ENCODE measurements at regions of chr1 and their contacts with region 1.

Region 1: GRCh38 chr1:92994105-92994712 is 32.9 kb upstream of the DIPK1A start:
- DNase-seq: peak; percentile 46
- H3K4me3 ChIP-seq: no peak overlapping the region
- CTCF ChIP-seq: peak; percentile 55

Region 2: DNA sequence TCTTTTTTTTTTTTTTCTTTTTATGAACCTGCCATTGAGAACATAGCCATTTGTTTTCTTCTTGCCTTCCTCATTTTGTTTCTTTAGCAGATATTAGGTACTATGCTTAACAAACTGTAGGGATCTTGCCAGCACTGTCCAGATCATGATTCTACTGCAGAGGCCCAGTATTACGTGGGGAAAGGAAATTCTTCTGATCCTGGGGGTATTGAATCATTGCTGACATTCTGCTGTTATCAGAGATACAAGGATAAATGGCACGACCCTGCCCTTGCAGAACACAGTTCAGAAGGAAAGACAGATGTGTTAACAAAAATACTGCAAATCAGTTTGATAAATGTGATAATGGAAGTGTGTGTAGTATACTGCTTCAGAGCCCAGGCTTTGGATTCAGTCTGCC is 857.9 kb before region 1 on chr1:
- CTCF ChIA-PET with region 1: no interaction called
- POLR2A ChIA-PET with region 1: no interaction called
- DNase-seq: no peak
- H3K4me3 ChIP-seq: no peak overlapping the region
- CTCF ChIP-seq: no peak

Region 3: DNA sequence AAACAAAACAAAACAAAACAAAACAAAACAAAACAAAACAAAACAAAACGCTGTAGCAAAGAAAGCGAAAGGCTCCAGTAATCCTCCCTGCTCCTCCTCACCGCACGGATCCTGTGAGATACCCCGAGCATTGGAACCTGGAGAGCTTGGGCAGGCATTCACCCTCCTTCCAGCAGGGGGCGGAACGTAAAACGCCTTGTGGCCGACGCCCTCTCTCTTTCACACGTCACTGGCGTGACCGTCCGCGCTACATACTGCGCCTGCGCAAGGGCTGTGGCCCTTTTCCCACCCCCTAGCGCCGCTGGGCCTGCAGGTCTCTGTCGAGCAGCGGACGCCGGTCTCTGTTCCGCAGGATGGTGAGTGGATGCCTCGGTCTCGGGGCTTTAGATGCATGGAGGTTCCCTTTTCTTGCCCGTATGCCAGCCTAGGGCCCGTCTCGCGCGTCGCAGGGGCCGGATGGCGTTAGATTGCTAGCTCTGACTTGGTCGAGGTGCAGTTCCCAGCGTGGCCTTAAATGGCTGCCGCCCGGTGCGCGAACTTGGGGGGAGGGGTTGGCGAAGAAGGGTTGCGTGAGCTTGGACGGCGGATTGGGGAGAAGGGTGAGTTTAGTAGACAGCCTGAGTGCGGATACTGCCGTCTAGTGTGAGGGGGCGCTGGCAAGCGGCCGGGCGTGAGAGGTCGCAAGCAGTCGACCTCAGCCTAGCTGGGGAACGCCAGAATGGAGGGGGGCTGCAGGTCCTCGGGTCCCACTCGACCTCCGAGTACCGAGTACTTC is 162.3 kb before region 1 on chr1 and contains the start of gene RPL5:
- CTCF ChIA-PET with region 1: interaction called, 28 read pairs
- POLR2A ChIA-PET with region 1: interaction called, 4 read pairs
- DNase-seq: peak; percentile 73
- H3K4me3 ChIP-seq: peak within 1 kb of the TSS; percentile 98
- CTCF ChIP-seq: peak; percentile 98

Region 4: DNA sequence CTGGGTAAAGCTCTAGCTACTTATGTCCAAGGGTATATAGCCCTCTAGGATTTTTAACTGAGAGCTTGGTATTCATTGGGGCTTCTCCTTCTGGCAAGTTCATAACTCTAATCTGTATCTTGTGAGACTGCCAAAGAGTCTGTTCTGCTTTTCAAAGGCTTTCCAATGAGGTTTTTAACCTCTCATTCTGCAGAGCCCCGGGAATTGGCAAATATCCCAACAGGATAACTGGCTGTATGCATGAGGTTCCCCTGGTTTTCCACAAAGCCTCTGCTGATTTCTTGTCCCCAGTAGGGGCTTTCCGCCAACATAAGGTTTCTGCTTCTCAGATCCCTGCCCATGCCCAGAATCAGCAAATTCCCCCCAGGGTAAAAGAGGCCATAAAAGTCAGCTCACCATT is 121.5 kb before region 1 on chr1:
- CTCF ChIA-PET with region 1: interaction called, 37 read pairs
- POLR2A ChIA-PET with region 1: no interaction called
- DNase-seq: no peak
- H3K4me3 ChIP-seq: no peak overlapping the region
- CTCF ChIP-seq: no peak

Region 5: DNA sequence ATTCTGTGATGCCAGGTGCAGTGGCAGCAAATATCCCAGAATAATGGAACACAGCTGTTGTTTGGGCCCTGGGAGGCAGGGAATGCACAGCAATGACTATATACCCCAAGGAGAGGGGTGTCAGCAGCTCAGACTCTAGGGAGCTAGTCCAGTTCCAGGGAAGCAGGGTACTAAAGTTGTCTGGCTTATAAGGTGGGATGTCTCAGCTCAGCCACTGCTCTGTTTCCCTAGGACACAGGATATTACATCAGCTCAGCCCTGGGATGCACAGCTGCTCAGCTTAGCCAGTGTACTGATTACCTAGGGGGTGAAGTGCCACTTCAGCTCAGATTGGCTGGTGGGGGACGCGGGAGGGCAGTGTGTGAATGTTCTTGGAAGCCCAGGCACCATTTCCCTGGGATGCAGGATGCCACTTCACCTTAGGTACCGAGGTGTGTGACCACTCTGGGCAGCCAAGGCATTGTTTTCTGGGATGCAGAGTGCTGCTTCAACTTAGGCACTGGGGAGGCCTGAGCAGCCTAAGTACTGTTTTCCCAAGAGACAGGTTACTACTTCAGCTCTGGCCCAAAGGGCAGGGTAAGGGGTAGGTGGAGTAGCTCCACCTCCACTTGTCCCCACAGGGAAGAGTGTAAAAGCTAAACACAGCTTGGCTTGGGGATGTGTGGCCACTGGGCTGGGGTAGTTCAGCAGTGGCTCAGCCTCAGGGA is 92.4 kb before region 1 on chr1:
- CTCF ChIA-PET with region 1: interaction called, 11 read pairs
- POLR2A ChIA-PET with region 1: no interaction called
- DNase-seq: no peak
- H3K4me3 ChIP-seq: no peak overlapping the region
- CTCF ChIP-seq: no peak

Region 6: GRCh38 chr1:92960395-92961130 is 33.6 kb before region 1 on chr1:
- CTCF ChIA-PET with region 1: interaction called, 52 read pairs
- POLR2A ChIA-PET with region 1: no interaction called
- DNase-seq: peak; percentile 41
- H3K4me3 ChIP-seq: peak overlapping the region; percentile 79
- CTCF ChIP-seq: peak; percentile 75

Region 7: DNA sequence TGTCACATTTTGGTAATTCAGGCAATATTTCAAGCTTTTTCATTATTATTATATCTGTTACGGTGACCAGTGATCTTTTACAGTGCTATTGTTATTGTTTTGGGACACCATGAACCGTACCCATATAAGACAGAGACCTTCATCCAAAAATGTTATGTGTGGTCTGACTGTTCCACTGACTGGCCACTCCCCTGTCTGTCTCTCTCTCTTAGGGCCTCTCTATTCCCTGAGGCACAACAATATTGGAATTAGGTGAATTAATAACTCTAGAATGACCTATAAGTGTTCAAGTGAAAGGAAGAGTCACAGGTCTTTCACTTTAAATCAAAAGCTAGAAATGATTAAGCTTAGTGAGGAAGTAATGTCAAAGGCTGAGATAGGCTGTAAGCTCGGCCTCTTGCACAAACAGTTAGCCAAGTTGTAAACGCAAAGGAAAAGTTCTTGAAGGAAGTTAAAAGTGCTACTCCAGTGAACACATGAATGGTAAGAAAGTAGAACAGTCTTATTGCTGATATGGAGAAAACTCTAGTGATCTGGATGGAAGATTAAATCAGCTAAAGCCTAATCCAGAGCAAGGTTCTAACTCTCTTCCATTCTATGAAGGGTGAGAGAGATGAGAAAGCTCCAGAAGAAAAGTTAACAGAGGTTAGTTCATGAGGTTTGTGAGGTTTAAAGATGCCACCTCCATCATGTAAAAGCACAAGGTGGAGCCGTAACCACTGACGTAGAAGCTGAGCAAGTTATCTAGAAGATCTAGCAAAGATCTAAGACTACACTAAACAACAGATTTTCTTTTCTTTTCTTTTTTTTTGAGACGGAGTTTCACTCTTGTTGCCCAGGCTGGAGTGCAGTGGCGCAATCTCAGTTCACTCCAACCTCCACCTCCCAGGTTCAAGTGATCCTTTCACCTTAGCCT is 13.2 kb before region 1 on chr1:
- CTCF ChIA-PET with region 1: interaction called, 22 read pairs
- POLR2A ChIA-PET with region 1: no interaction called
- DNase-seq: no peak
- H3K4me3 ChIP-seq: no peak overlapping the region
- CTCF ChIP-seq: no peak

Region 8: GRCh38 chr1:93061895-93062792 is 67.9 kb after region 1 on chr1:
- CTCF ChIA-PET with region 1: interaction called, 15 read pairs
- POLR2A ChIA-PET with region 1: no interaction called
- DNase-seq: no peak
- H3K4me3 ChIP-seq: no peak overlapping the region
- CTCF ChIP-seq: peak; percentile 26

Region 9: DNA sequence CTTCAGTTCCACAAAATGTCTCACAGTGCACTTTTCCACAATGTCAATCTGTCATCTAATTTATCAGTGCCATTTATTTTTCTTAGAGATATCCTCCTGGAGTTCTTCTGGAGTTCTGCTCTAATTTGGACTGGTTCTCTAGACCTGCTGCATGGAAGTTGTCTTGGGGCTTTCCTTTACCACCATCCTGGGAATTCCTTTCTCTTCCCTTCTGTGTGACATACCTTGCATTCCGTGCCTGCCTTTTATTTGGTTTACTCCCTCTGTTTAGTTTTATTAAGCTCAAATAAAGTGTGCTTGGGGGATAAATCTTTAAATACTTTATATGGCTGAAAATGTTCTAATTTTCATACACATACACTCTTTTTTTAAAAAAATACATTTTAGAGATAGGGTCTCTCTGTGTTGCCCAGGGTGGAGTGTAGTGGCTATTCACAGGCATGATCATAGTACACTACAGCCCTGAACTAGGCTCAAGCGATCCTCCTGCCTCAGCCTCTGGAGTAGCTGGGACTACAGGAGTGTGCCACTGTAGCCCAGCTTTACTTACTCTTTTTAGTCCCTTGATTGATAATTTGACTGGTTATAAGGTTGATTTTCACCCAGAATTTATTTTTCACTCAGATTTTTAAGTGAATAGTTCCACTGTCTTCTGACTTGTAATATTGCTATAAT is 99.3 kb after region 1 on chr1:
- CTCF ChIA-PET with region 1: no interaction called
- POLR2A ChIA-PET with region 1: no interaction called
- DNase-seq: no peak
- H3K4me3 ChIP-seq: no peak overlapping the region
- CTCF ChIP-seq: no peak